MCF 10A (cell line): ENCODE measurements at regions of chr22 and their contacts with region 1.

Region 1: DNA sequence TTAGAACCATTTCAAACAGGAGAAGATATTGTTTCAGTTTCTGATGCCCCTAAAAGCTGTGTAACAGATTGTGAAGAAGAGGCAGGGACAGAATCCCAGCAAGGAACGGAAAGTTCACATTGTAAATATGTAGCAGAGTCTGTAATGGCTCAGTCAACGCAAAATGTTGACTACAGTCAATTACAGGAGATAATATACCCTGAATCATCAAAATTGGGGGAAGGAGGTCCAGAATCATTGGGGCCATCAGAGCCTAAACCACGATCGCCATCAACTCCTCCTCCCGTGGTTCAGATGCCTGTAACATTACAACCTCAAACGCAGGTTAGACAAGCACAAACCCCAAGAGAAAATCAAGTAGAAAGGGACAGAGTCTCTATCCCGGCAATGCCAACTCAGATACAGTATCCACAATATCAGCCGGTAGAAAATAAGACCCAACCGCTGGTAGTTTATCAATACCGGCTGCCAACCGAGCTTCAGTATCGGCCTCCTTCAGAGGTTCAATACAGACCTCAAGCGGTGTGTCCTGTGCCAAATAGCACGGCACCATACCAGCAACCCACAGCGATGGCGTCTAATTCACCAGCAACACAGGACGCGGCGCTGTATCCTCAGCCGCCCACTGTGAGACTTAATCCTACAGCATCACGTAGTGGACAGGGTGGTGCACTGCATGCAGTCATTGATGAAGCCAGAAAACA is 40.8 kb downstream of the IGLL1 start:
- DNase-seq: peak; percentile 82
- H3K4me3 Mint-ChIP-seq: peak overlapping the region; percentile 16
- H3K27ac Mint-ChIP-seq: no peak overlapping the region
- H3K4me1 Mint-ChIP-seq: peaks cover 7% of the 10 kb centered on the region
- H3K27me3 Mint-ChIP-seq: peaks cover 11% of the 10 kb centered on the region
- CTCF ChIP-seq: peak; percentile 75

Region 2: DNA sequence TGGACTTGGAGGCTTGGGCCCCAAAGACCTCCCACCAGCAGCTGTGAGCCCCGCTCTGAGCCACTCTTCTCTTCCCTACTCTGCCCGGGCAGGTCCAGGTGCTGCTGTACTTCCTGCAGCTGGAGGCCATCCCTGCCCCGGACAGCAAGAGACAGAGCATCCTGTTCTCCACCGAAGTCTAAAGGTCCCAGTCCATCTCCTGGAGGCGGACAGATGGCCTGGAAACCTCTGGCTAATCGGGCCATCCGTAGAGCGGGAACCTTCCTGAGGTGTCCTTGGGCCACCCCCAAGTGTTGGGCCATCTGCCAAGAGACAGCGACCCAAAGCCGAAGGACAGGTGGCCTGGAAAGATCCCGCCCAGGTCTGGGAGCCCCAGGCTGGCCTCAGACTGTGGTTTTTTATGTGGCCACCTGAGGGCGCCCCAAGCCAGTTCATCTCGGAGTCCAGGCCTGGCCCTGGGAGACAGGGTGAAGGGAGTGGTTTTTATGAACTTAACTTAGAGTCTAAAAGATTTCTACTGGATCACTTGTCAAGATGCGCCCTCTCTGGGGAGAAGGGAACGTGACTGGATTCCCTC is 223.9 kb before region 1 on chr22:
- CTCF ChIA-PET with region 1: no interaction called
- POLR2A ChIA-PET with region 1: no interaction called
- intact Hi-C with region 1: loop called (anchors 1 kb)
- DNase-seq: peak; percentile 67
- H3K4me3 Mint-ChIP-seq: no peak overlapping the region
- H3K27ac Mint-ChIP-seq: peak overlapping the region; percentile 39
- H3K4me1 Mint-ChIP-seq: no peaks in the 10 kb centered on the region
- H3K27me3 Mint-ChIP-seq: no peaks in the 10 kb centered on the region
- CTCF ChIP-seq: peak; percentile 73

Region 3: GRCh38 chr22:23402275-23403151 is 136.8 kb before region 1 on chr22:
- CTCF ChIA-PET with region 1: no interaction called
- POLR2A ChIA-PET with region 1: no interaction called
- intact Hi-C with region 1: loop called (anchors 5 kb)
- DNase-seq: peak; percentile 73
- H3K4me3 Mint-ChIP-seq: peak overlapping the region; percentile 19
- H3K27ac Mint-ChIP-seq: no peak overlapping the region
- H3K4me1 Mint-ChIP-seq: no peaks in the 10 kb centered on the region
- H3K27me3 Mint-ChIP-seq: peaks cover 22% of the 10 kb centered on the region
- CTCF ChIP-seq: peak; percentile 61

Region 4: DNA sequence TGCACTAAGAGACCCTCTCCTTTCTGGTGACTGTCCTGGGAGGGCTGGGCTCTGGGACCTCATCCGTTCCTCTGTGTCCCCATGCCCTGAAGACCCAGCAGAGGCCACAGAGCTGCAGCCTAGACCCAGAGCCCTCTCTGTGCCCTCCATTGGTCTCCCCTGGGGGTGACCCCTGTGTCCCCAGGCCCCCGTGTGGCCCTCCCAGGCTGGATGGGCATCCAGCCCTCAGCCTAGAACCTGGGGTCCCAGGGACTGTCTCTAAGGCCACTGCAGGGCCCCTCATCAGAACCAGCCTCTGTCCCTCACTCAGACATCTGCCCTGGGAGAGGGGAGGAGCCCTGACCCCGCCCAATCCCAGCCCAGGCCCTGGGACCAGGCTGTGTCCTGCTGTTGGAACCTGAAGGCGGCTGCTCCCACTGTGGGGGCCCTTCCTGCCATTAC is 35.1 kb after region 1 on chr22:
- CTCF ChIA-PET with region 1: no interaction called
- POLR2A ChIA-PET with region 1: no interaction called
- intact Hi-C with region 1: no loop called
- DNase-seq: no peak
- H3K4me3 Mint-ChIP-seq: no peak overlapping the region
- H3K27ac Mint-ChIP-seq: no peak overlapping the region
- H3K4me1 Mint-ChIP-seq: no peaks in the 10 kb centered on the region
- H3K27me3 Mint-ChIP-seq: peaks cover 61% of the 10 kb centered on the region
- CTCF ChIP-seq: no peak

Region 5: GRCh38 chr22:23591201-23591791 is 52.0 kb after region 1 on chr22:
- CTCF ChIA-PET with region 1: interaction called, 5 read pairs
- POLR2A ChIA-PET with region 1: no interaction called
- intact Hi-C with region 1: loop called (anchors 1 kb)
- DNase-seq: peak; percentile 46
- H3K4me3 Mint-ChIP-seq: no peak overlapping the region
- H3K27ac Mint-ChIP-seq: no peak overlapping the region
- H3K4me1 Mint-ChIP-seq: no peaks in the 10 kb centered on the region
- H3K27me3 Mint-ChIP-seq: peaks cover 44% of the 10 kb centered on the region
- CTCF ChIP-seq: peak; percentile 79

Region 6: DNA sequence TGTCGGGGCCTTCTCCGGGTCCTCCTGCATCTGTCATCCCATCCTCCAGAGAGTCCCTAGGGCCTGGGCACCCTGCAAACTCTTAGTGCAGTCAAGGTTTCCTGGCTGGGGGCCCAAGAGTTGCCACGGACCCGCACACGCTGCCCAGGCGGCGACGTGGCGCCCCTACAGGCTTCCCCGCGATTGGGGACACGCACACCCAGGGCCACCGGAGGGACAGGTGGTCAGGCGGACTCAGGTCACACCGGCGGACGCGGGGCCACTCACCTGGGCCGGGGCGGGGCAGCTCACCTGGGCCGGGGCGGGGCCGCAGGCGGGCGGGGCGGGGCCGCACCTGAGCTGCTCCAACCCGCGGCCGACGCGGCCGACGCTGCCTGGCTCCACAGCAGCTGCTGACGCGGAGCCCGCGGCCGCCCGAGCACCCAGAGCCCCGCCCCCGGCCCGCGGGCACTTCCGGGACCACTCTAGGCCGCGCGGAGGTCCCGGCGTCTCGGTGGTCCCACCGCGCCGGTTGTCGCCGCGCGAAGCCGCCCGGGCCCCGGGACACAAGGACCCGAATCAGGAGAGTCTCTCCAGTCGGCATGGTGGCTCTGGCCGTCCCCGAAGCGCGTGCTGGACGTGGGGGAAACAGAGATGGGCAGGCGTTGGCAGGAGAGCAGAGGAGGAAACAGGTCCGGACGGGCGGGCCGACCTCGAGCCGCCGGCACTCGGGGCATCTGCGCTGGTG is 211.6 kb after region 1 on chr22 and contains the start of gene ZNF70:
- CTCF ChIA-PET with region 1: no interaction called
- POLR2A ChIA-PET with region 1: no interaction called
- intact Hi-C with region 1: no loop called
- DNase-seq: peak; percentile 84
- H3K4me3 Mint-ChIP-seq: peak within 1 kb of the TSS; percentile 83
- H3K27ac Mint-ChIP-seq: peak within 1 kb of the TSS; percentile 73
- H3K4me1 Mint-ChIP-seq: peaks cover 13% of the 10 kb centered on the region
- H3K27me3 Mint-ChIP-seq: no peaks in the 10 kb centered on the region
- CTCF ChIP-seq: no peak
- total RNA-seq, gene ZNF70: 3.3 and 4.5 TPM in 2 replicates

Region 7: GRCh38 chr22:23767673-23768548 is 228.6 kb after region 1 on chr22 and contains the start of gene CHCHD10:
- CTCF ChIA-PET with region 1: no interaction called
- POLR2A ChIA-PET with region 1: no interaction called
- intact Hi-C with region 1: loop called (anchors 5 kb)
- DNase-seq: peak; percentile 69
- H3K4me3 Mint-ChIP-seq: peak within 1 kb of the TSS; percentile 69
- H3K27ac Mint-ChIP-seq: no peak within 1 kb of the TSS
- H3K4me1 Mint-ChIP-seq: peaks cover 9% of the 10 kb centered on the region
- H3K27me3 Mint-ChIP-seq: no peaks in the 10 kb centered on the region
- CTCF ChIP-seq: peak; percentile 68
- total RNA-seq, gene CHCHD10: 86.0 and 90.1 TPM in 2 replicates